Natural killer cell (primary cell): ENCODE measurements at regions of chr12 and their contacts with region 1.

Region 1: DNA sequence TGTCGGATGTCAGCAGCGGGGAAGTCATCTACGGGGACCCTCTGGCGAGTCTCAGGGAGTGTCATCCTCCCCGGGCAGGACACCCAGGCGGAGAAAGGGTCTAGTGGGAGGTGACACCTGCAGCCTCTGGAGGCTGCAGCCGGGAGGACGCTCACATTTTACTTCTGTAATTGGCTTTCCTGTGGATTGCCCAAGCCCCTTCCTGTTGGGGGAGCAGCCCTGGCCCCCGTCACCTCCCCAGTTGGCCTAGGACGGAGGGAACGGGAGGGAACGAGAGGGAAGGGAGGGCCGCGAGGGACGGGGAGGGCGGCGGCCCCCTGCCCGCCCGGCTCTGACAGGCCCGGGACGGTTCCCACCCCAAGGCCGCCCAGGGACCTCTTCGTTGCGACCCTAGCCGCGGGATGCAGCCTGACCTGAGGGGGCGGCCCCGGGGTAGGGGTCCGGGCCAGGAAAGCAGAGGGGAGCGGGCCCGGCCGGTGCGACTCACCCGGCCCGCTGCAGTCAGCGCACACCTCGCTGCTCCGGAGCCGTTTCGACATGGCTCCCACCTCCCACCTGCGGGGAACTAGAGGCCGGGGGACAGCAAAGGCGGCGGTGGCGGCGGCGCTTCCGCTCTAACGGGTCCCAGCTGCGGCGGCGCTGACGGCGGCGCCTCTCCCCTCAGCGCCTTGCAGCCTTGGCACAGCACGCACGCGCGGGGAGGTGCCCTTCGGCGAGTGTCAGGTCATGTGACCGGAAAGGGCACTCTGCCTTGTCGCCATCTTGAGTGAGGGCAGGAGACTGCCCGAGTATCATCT is at the start of gene GIT2:
- DNase-seq: peak; percentile 89 to 98
- ATAC-seq: peak; percentile 67 to 83 (median 77)
- H3K4me3 ChIP-seq: peak within 1 kb of the TSS; percentile 93
- H3K4me3 Mint-ChIP-seq: peak within 1 kb of the TSS; percentile 91
- H3K27ac ChIP-seq: peak within 1 kb of the TSS; percentile 90
- H3K27ac Mint-ChIP-seq: peak within 1 kb of the TSS; percentile 93 to 96
- H3K4me1 ChIP-seq: peaks cover 35% of the 10 kb centered on the region
- H3K4me1 Mint-ChIP-seq: peaks cover 53 to 67% of the 10 kb centered on the region in 2 donors
- H3K27me3 ChIP-seq: no peaks in the 10 kb centered on the region
- H3K27me3 Mint-ChIP-seq: no peaks in the 10 kb centered on the region
- CTCF ChIP-seq: no peak
- total RNA-seq, gene GIT2: 98.8 to 118 (median 117) TPM

Region 2: DNA sequence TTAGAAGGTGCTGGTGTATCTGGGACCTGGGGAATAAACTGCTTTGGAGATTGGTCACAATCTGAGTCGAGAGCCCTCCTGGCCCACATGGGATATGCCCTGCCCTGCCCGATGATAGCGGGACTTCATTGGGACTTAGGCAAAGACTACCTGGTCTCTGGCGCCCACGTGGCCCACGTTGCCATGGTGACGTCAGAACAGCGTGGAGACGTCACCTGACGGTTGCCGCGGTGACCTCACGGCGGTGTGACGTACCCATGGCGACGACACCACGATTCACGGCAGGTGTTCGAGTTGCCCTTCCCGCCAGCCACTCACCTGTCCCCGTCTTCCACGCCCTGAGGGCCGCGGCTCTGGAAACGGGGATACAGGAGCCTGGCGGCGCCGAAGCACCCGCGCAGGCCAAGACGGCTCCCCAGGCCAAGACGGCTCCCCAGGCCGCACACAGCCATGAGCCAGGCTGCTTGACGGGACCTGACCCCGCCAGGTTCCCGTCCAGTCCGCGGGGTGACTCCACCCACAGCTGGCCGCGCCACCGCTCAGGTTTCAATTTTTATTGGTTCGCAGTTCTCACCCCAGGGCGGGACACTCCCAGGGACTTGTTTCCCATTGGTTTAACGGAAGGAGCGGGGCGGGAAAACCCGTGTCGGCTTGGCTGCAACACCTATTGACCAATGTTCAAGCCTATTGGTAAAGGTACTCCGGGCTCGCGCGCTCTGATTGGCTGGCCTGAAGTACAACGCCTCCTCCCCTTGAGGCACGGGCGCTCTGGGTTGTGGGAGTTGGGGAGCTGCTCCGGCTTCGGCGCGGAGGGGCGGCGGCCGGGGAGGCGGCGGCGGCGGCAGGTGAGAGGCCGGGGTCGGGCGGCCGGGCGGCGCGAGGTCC is 422.6 kb before region 1 on chr12 and contains the starts of genes MMAB and MVK:
- intact Hi-C with region 1: loop called (anchors 5 kb)
- DNase-seq: peak; percentile 97 to 99
- ATAC-seq: peak; percentile 88 to 95 (median 94)
- H3K4me3 ChIP-seq: peak within 1 kb of the TSS; percentile 63
- H3K4me3 Mint-ChIP-seq: peak within 1 kb of the TSS; percentile 95
- H3K27ac ChIP-seq: peak within 1 kb of the TSS; percentile 88
- H3K27ac Mint-ChIP-seq: peak within 1 kb of the TSS; percentile 96 to 99
- H3K4me1 ChIP-seq: peaks cover 21% of the 10 kb centered on the region
- H3K4me1 Mint-ChIP-seq: peaks cover 27 to 29% of the 10 kb centered on the region in 2 donors
- H3K27me3 ChIP-seq: no peaks in the 10 kb centered on the region
- H3K27me3 Mint-ChIP-seq: no peaks in the 10 kb centered on the region
- CTCF ChIP-seq: no peak
- total RNA-seq, gene MMAB: 17.1 to 18.3 (median 17.6) TPM
- total RNA-seq, gene MVK: 9.4 to 16.6 (median 16.2) TPM

Region 3: GRCh38 chr12:109713187-109713984 is 282.5 kb before region 1 on chr12 and contains the start of gene FAM222A:
- intact Hi-C with region 1: loop called (anchors 5 kb)
- DNase-seq: peak; percentile 97 to 98
- ATAC-seq: peak; percentile 85 to 96 (median 85)
- H3K4me3 ChIP-seq: peak within 1 kb of the TSS; percentile 53
- H3K4me3 Mint-ChIP-seq: peak within 1 kb of the TSS; percentile 84
- H3K27ac ChIP-seq: no peak within 1 kb of the TSS
- H3K27ac Mint-ChIP-seq: peak within 1 kb of the TSS in 1 of 2 donors; percentile 29
- H3K4me1 ChIP-seq: peaks cover 9% of the 10 kb centered on the region
- H3K4me1 Mint-ChIP-seq: no peaks in the 10 kb centered on the region
- H3K27me3 ChIP-seq: peaks cover 17% of the 10 kb centered on the region
- H3K27me3 Mint-ChIP-seq: peaks cover 25 to 31% of the 10 kb centered on the region in 2 donors
- CTCF ChIP-seq: no peak
- total RNA-seq, gene FAM222A: 3.1 to 6.6 (median 4.0) TPM

Region 4: DNA sequence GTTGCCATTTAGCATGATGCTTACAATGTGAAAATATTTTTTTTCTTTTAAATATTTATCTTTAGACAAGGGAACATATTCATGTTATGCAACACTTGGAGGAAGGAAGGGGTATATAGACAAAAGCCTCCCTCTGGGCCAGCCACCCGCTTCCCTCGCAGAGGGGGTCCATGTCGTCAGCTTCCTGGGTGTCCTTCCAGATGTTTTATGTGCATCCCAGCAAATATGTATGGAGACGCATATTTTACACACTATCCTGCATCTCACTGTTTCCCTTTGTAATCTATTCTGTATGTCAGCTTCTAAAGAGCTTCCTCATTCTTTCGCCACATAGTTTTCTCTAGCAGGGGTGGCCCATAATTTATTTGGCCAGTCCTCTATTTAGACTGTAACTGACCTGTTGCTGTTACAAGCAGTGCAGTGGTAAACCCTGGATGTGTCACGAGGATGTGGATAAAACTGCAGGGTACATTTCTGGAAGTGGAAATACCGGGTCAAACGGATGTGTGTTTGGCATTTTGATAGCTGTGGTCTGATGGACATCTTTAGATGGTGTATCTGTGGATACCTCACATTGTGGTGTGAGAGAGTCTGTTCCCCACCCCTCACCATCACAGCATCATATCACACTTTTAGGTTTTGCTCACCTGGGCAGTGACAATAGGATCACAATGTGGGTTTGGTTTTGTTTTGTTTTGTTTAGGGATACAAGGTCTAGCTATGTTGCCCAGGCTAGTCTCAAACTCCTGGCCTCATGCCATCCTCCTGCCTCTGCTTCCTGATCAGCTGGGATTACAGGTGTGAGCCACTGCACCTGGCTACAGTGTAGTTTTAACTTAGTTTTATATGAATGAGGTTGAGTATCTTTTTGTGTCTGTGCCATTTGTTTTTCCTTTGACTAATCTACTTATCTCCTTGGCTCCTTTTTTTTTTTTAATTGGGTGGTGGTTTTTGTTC is 250.6 kb before region 1 on chr12:
- intact Hi-C with region 1: no loop called
- DNase-seq: no peak
- ATAC-seq: no peak
- H3K4me3 ChIP-seq: no peak overlapping the region
- H3K4me3 Mint-ChIP-seq: no peak overlapping the region
- H3K27ac ChIP-seq: no peak overlapping the region
- H3K27ac Mint-ChIP-seq: no peak overlapping the region
- H3K4me1 ChIP-seq: no peaks in the 10 kb centered on the region
- H3K4me1 Mint-ChIP-seq: no peaks in the 10 kb centered on the region
- H3K27me3 ChIP-seq: no peaks in the 10 kb centered on the region
- H3K27me3 Mint-ChIP-seq: peaks cover 0 to 4% of the 10 kb centered on the region in 2 donors
- CTCF ChIP-seq: no peak

Region 5: GRCh38 chr12:109880016-109880931 is 115.6 kb before region 1 on chr12 and contains the start of gene GLTP:
- intact Hi-C with region 1: loop called (anchors 10 kb)
- DNase-seq: peak; percentile 92 to 96
- ATAC-seq: peak; percentile 96 to 99 (median 96)
- H3K4me3 ChIP-seq: peak within 1 kb of the TSS; percentile 96
- H3K4me3 Mint-ChIP-seq: peak within 1 kb of the TSS; percentile 95
- H3K27ac ChIP-seq: peak within 1 kb of the TSS; percentile 95
- H3K27ac Mint-ChIP-seq: peak within 1 kb of the TSS; percentile 80 to 97
- H3K4me1 ChIP-seq: peaks cover 42% of the 10 kb centered on the region
- H3K4me1 Mint-ChIP-seq: peaks cover 48 to 55% of the 10 kb centered on the region in 2 donors
- H3K27me3 ChIP-seq: no peaks in the 10 kb centered on the region
- H3K27me3 Mint-ChIP-seq: no peaks in the 10 kb centered on the region
- CTCF ChIP-seq: peak; percentile 57
- total RNA-seq, gene GLTP: 48.6 to 52.8 (median 49.2) TPM

Region 6: DNA sequence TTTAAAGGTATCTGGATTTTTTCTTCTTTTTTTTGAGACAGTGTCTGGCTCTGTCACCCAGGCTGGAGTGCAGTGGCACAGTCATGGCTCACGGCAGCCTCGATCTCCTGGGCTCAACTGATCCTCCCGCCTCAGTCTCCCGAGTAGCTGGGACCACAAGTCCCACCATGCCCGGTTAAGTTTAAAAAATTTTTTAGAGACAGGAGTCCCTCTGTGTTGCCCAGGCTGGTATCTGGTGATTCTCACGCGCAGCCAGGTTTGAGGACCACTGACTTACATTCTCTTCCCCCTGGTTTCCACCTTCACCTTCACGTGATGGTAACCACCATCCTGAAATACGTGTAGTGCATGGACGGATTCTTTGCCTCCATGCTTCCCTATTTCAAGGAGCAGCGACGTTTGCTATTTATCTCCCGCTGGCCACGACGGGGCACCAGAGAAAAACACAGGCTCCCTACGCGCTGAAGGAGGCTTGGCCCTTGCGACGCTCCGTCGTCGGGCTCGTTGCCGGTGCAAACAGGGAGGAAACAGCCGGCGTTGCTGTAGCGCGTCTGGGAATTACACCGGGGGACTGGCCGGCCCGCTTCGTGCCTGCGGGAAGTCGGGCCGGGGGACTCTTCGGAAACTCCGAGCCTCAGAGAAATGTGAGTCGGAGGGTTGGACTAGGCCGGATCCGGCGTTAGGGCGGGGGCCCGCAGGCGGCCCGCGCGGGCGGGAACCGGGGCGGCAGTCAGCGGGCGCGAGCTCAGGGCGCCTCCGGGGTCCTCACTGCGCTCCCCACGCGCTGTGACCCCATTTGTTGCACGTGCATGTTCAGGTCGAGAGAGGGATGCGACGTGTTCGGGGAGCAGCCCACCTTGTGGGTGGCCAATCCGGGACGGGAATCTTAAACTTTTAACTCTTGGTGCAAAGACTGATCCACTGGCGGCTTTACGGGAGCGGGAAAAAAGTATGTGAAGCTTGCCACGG is 95.8 kb before region 1 on chr12 and contains the start of gene TCHP:
- intact Hi-C with region 1: loop called (anchors 5 kb)
- DNase-seq: peak; percentile 60 to 91
- ATAC-seq: peak; percentile 88 to 94 (median 92)
- H3K4me3 ChIP-seq: peak within 1 kb of the TSS; percentile 77
- H3K4me3 Mint-ChIP-seq: peak within 1 kb of the TSS; percentile 99
- H3K27ac ChIP-seq: peak within 1 kb of the TSS; percentile 78
- H3K27ac Mint-ChIP-seq: peak within 1 kb of the TSS; percentile 95 to 96
- H3K4me1 ChIP-seq: peaks cover 24% of the 10 kb centered on the region
- H3K4me1 Mint-ChIP-seq: peaks cover 25 to 31% of the 10 kb centered on the region in 2 donors
- H3K27me3 ChIP-seq: no peaks in the 10 kb centered on the region
- H3K27me3 Mint-ChIP-seq: no peaks in the 10 kb centered on the region
- CTCF ChIP-seq: no peak
- total RNA-seq, gene TCHP: 33.7 to 42.5 (median 38.7) TPM

Region 7: GRCh38 chr12:109910969-109911348 is 84.9 kb before region 1 on chr12:
- intact Hi-C with region 1: no loop called
- DNase-seq: peak in 1 of 2 donors; percentile 27
- ATAC-seq: no peak
- H3K4me3 ChIP-seq: no peak overlapping the region
- H3K4me3 Mint-ChIP-seq: no peak overlapping the region
- H3K27ac ChIP-seq: no peak overlapping the region
- H3K27ac Mint-ChIP-seq: no peak overlapping the region
- H3K4me1 ChIP-seq: no peaks in the 10 kb centered on the region
- H3K4me1 Mint-ChIP-seq: peaks cover 0 to 11% of the 10 kb centered on the region in 2 donors
- H3K27me3 ChIP-seq: no peaks in the 10 kb centered on the region
- H3K27me3 Mint-ChIP-seq: no peaks in the 10 kb centered on the region
- CTCF ChIP-seq: peak; percentile 12

Region 8: GRCh38 chr12:110048242-110049027 is 52.6 kb after region 1 on chr12 and contains the start of gene C12orf76:
- intact Hi-C with region 1: loop called (anchors 5 kb)
- DNase-seq: peak; percentile 80 to 98
- ATAC-seq: peak; percentile 99 to 100 (median 100)
- H3K4me3 ChIP-seq: peak within 1 kb of the TSS; percentile 66
- H3K4me3 Mint-ChIP-seq: peak within 1 kb of the TSS; percentile 88
- H3K27ac ChIP-seq: peak within 1 kb of the TSS; percentile 73
- H3K27ac Mint-ChIP-seq: peak within 1 kb of the TSS; percentile 87 to 93
- H3K4me1 ChIP-seq: peaks cover 20% of the 10 kb centered on the region
- H3K4me1 Mint-ChIP-seq: peaks cover 13 to 27% of the 10 kb centered on the region in 2 donors
- H3K27me3 ChIP-seq: no peaks in the 10 kb centered on the region
- H3K27me3 Mint-ChIP-seq: no peaks in the 10 kb centered on the region
- CTCF ChIP-seq: no peak
- total RNA-seq, gene C12orf76: 9.9 to 12.1 (median 10.9) TPM